CD4-positive, alpha-beta memory T cell (primary cell): ENCODE measurements at regions of chr1 and their contacts with region 1.

Region 1: DNA sequence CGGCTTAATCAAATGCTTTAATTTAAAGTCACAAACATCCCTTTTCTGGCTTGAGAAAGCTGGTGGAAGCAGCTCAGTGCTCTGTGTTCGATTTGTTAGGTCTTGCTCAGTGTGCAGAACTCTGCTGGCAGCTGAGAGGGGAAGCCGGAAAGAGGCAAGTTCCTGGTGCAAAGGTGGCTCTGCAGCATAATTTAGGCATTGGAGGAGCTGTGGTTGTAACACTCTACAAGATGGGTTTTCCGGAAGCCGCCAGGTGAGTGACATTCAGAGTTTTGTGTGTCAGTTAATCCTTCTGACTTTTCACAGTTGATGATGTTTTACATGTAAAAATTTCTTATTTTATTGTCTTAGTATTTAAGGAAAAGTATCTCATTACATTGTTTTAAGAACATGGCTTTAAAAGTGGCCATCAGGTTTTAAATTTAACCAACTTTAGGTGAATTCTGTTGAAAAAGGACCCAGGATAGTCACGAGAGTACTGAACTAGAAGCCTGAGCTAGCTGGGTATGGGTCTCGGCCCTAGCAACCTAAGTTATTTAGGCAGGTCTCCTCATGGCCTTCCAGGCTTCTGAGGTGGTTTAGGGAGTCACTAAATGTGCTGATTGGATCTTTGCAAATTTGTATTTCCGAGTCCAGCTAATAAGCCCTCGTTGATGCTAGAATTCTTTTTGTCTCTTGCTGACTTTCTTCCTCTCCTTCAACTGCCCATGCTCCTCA is 47.1 kb upstream of the PODN start:
- DNase-seq: peak; percentile 82 to 93 (median 89)
- H3K4me3 ChIP-seq: peak overlapping the region; percentile 32 to 54
- H3K4me3 Mint-ChIP-seq: peak overlapping the region; percentile 88 to 98 (median 90)
- H3K27ac ChIP-seq: peak overlapping the region; percentile 39
- H3K27ac Mint-ChIP-seq: peak overlapping the region; percentile 67 to 92 (median 88)
- H3K4me1 ChIP-seq: peaks cover 24% of the 10 kb centered on the region
- H3K4me1 Mint-ChIP-seq: peaks cover 27 to 34% (median 30%) of the 10 kb centered on the region in 4 donors
- H3K27me3 ChIP-seq: no peaks in the 10 kb centered on the region
- H3K27me3 Mint-ChIP-seq: no peaks in the 10 kb centered on the region

Region 2: GRCh38 chr1:52726265-52727113 is 288.5 kb before region 1 on chr1 and contains the start of gene ZYG11B:
- CTCF ChIA-PET with region 1: no interaction called
- POLR2A ChIA-PET with region 1: no interaction called
- intact Hi-C with region 1: loop called (anchors 5 kb)
- DNase-seq: peak; percentile 87 to 90 (median 89)
- H3K4me3 ChIP-seq: peak within 1 kb of the TSS; percentile 67 to 74
- H3K4me3 Mint-ChIP-seq: peak within 1 kb of the TSS; percentile 85 to 98 (median 96)
- H3K27ac ChIP-seq: peak within 1 kb of the TSS; percentile 74
- H3K27ac Mint-ChIP-seq: peak within 1 kb of the TSS; percentile 49 to 97 (median 94)
- H3K4me1 ChIP-seq: peaks cover 33% of the 10 kb centered on the region
- H3K4me1 Mint-ChIP-seq: peaks cover 35 to 41% (median 36%) of the 10 kb centered on the region in 4 donors
- H3K27me3 ChIP-seq: no peaks in the 10 kb centered on the region
- H3K27me3 Mint-ChIP-seq: peaks cover 0 to 2% of the 10 kb centered on the region in 2 donors
- total RNA-seq, gene ZYG11B: 21.7 to 23.1 TPM

Region 3: GRCh38 chr1:52920791-52921291 is 94.1 kb before region 1 on chr1:
- CTCF ChIA-PET with region 1: interaction called, 4 read pairs
- POLR2A ChIA-PET with region 1: interaction called, 10 read pairs
- intact Hi-C with region 1: loop called (anchors 10 kb)
- DNase-seq: no peak
- H3K4me3 ChIP-seq: peak overlapping the region in 1 of 2 donors; percentile 69
- H3K4me3 Mint-ChIP-seq: peak overlapping the region; percentile 79 to 93 (median 85)
- H3K27ac ChIP-seq: peak overlapping the region; percentile 54
- H3K27ac Mint-ChIP-seq: peak overlapping the region; percentile 47 to 92 (median 67)
- H3K4me1 ChIP-seq: peaks cover 29% of the 10 kb centered on the region
- H3K4me1 Mint-ChIP-seq: peaks cover 26 to 35% (median 27%) of the 10 kb centered on the region in 4 donors
- H3K27me3 ChIP-seq: no peaks in the 10 kb centered on the region
- H3K27me3 Mint-ChIP-seq: no peaks in the 10 kb centered on the region

Region 4: GRCh38 chr1:52927212-52928014 is 87.5 kb before region 1 on chr1 and contains the start of gene SCP2:
- CTCF ChIA-PET with region 1: no interaction called
- POLR2A ChIA-PET with region 1: interaction called, 10 read pairs
- intact Hi-C with region 1: loop called (anchors 10 kb)
- DNase-seq: peak; percentile 71 to 79 (median 75)
- H3K4me3 ChIP-seq: peak within 1 kb of the TSS; percentile 55 to 76
- H3K4me3 Mint-ChIP-seq: peak within 1 kb of the TSS; percentile 81 to 92 (median 87)
- H3K27ac ChIP-seq: peak within 1 kb of the TSS; percentile 53
- H3K27ac Mint-ChIP-seq: peak within 1 kb of the TSS; percentile 3 to 93 (median 79)
- H3K4me1 ChIP-seq: peaks cover 13% of the 10 kb centered on the region
- H3K4me1 Mint-ChIP-seq: peaks cover 15 to 27% (median 17%) of the 10 kb centered on the region in 4 donors
- H3K27me3 ChIP-seq: no peaks in the 10 kb centered on the region
- H3K27me3 Mint-ChIP-seq: no peaks in the 10 kb centered on the region
- total RNA-seq, gene SCP2: 49.7 to 52.1 TPM